GM12878 (cell line): ENCODE measurements at regions of chr15 and their contacts with region 1.

Region 1: GRCh38 chr15:64507293-64507802 is 47.0 kb downstream of the ZNF609 start:
- DNase-seq: peak; percentile 48
- ATAC-seq: peak; percentile 93
- H3K4me3 ChIP-seq: no peak overlapping the region
- H3K27ac ChIP-seq: peak overlapping the region; percentile 76
- H3K4me1 ChIP-seq: peaks cover 30% of the 10 kb centered on the region
- H3K27me3 ChIP-seq: no peaks in the 10 kb centered on the region
- CTCF ChIP-seq: no peak
- EP300 ChIP-seq: 0 out of 4 replicates have a peak, but pooled peaks of 1 of the 2 experiments have one; percentile 8
- POLR2A ChIP-seq: no peak
- RAD21 ChIP-seq: no peak

Region 2: GRCh38 chr15:64430000-64430735 is 77.2 kb before region 1 on chr15:
- CTCF ChIA-PET with region 1: interaction called, 5 read pairs
- POLR2A ChIA-PET with region 1: interaction called, 5 read pairs
- RAD21 ChIA-PET with region 1: interaction called, 10 read pairs
- SMC1A ChIA-PET with region 1: interaction called, 10 read pairs
- in situ Hi-C with region 1: no loop called
- intact Hi-C with region 1: no loop called
- DNase-seq: peak; percentile 65
- ATAC-seq: peak; percentile 87
- H3K4me3 ChIP-seq: 0 out of 2 replicates have a peak overlapping the region, but pooled peaks have one; percentile 6
- H3K27ac ChIP-seq: peak overlapping the region; percentile 87
- H3K4me1 ChIP-seq: peaks cover 19% of the 10 kb centered on the region
- H3K27me3 ChIP-seq: no peaks in the 10 kb centered on the region
- CTCF ChIP-seq: no peak
- EP300 ChIP-seq: peak in 1 of 2 experiments; percentile 55; a peak in 2 of 4 replicates
- POLR2A ChIP-seq: no peak
- RAD21 ChIP-seq: no peak

Region 3: GRCh38 chr15:64460206-64460734 is 47.1 kb before region 1 on chr15 and contains the start of gene ZNF609:
- CTCF ChIA-PET with region 1: interaction called, 6 read pairs
- POLR2A ChIA-PET with region 1: interaction called, 6 read pairs
- RAD21 ChIA-PET with region 1: interaction called, 10 read pairs
- SMC1A ChIA-PET with region 1: interaction called, 32 read pairs
- in situ Hi-C with region 1: no loop called
- intact Hi-C with region 1: no loop called
- DNase-seq: no peak
- ATAC-seq: peak; percentile 63
- H3K4me3 ChIP-seq: peak within 1 kb of the TSS; percentile 78
- H3K27ac ChIP-seq: peak within 1 kb of the TSS; percentile 92
- H3K4me1 ChIP-seq: peaks cover 50% of the 10 kb centered on the region
- H3K27me3 ChIP-seq: no peaks in the 10 kb centered on the region
- CTCF ChIP-seq: 0 out of 6 replicates have a peak, but pooled peaks of 1 of the 3 experiments have one; percentile 4
- EP300 ChIP-seq: no peak
- POLR2A ChIP-seq: peak; percentile 72
- RAD21 ChIP-seq: peak; percentile 27; the same call in 1 of the 2 replicates
- polyA plus RNA-seq, gene ZNF609: 5.1 to 7.4 TPM

Region 4: GRCh38 chr15:64521726-64522164 is 14.4 kb after region 1 on chr15:
- CTCF ChIA-PET with region 1: interaction called, 8 read pairs
- POLR2A ChIA-PET with region 1: interaction called, 3 read pairs
- RAD21 ChIA-PET with region 1: interaction called, 4 read pairs
- SMC1A ChIA-PET with region 1: interaction called, 11 read pairs
- in situ Hi-C with region 1: no loop called
- intact Hi-C with region 1: no loop called
- DNase-seq: no peak
- ATAC-seq: peak; percentile 73
- H3K4me3 ChIP-seq: no peak overlapping the region
- H3K27ac ChIP-seq: no peak overlapping the region
- H3K4me1 ChIP-seq: no peaks in the 10 kb centered on the region
- H3K27me3 ChIP-seq: no peaks in the 10 kb centered on the region
- CTCF ChIP-seq: no peak
- EP300 ChIP-seq: no peak
- POLR2A ChIP-seq: no peak
- RAD21 ChIP-seq: no peak

Region 5: GRCh38 chr15:64558460-64559179 is 51.3 kb after region 1 on chr15:
- CTCF ChIA-PET with region 1: interaction called, 7 read pairs
- POLR2A ChIA-PET with region 1: interaction called, 6 read pairs
- RAD21 ChIA-PET with region 1: interaction called, 11 read pairs
- SMC1A ChIA-PET with region 1: interaction called, 31 read pairs
- in situ Hi-C with region 1: no loop called
- intact Hi-C with region 1: no loop called
- DNase-seq: no peak
- ATAC-seq: peak; percentile 79
- H3K4me3 ChIP-seq: no peak overlapping the region
- H3K27ac ChIP-seq: peak overlapping the region; percentile 7; the same call in 1 of the 2 replicates
- H3K4me1 ChIP-seq: no peaks in the 10 kb centered on the region; the same call in 1 of the 2 replicates
- H3K27me3 ChIP-seq: no peaks in the 10 kb centered on the region
- CTCF ChIP-seq: no peak
- EP300 ChIP-seq: no peak
- POLR2A ChIP-seq: no peak
- RAD21 ChIP-seq: no peak

Region 6: GRCh38 chr15:64571857-64572291 is 64.5 kb after region 1 on chr15:
- CTCF ChIA-PET with region 1: interaction called, 4 read pairs
- POLR2A ChIA-PET with region 1: interaction called, 3 read pairs
- RAD21 ChIA-PET with region 1: interaction called, 12 read pairs
- SMC1A ChIA-PET with region 1: interaction called, 15 read pairs
- in situ Hi-C with region 1: no loop called
- intact Hi-C with region 1: no loop called
- DNase-seq: peak; percentile 92
- ATAC-seq: peak; percentile 83
- H3K4me3 ChIP-seq: no peak overlapping the region
- H3K27ac ChIP-seq: peak overlapping the region; percentile 75
- H3K4me1 ChIP-seq: peaks cover 43% of the 10 kb centered on the region
- H3K27me3 ChIP-seq: no peaks in the 10 kb centered on the region
- CTCF ChIP-seq: no peak
- EP300 ChIP-seq: 0 out of 4 replicates have a peak, but pooled peaks of 1 of the 2 experiments have one; percentile 29
- POLR2A ChIP-seq: no peak
- RAD21 ChIP-seq: no peak

Region 7: DNA sequence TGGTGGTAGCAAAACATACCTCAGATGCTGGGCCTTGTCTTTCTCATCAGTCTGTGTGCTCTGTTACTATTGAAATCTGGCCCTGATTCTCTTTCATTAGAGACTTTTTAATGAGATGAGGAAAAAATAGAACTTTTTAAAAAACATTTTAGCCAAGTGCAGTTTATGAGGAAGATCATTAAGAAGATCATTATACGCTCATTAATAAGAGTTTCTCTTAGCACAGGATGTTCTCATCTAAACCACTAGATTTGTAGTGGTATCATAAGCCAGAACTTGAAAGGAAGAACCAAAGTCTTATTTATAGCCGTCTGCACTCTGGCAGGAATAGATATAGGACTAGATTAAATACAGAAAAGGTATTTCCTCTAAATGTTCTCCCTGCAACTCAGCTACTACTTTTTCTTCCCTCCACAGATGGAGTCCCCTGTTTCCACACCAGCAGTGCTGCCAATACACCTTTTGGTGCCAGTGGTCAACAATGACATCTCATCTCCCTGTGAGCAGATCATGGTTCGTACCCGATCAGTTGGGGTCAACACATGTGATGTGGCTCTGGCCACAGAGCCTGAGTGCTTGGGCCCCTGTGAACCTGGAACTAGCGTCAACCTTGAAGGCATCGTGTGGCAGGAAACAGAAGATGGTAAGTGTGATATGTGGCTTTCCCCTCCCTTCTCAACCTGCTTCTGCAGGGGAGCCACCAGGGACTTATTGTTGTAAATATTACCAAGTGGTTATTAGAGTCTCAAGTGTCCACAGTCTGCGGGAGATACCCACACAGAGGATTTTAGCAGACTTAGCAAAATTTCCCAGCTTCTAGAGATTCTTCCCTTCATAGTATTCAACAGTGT is 115.3 kb after region 1 on chr15:
- CTCF ChIA-PET with region 1: interaction called, 5 read pairs
- POLR2A ChIA-PET with region 1: no interaction called
- RAD21 ChIA-PET with region 1: interaction called, 13 read pairs
- SMC1A ChIA-PET with region 1: interaction called, 10 read pairs
- in situ Hi-C with region 1: no loop called
- intact Hi-C with region 1: no loop called
- DNase-seq: peak; percentile 96
- ATAC-seq: peak; percentile 93
- H3K4me3 ChIP-seq: no peak overlapping the region
- H3K27ac ChIP-seq: peak overlapping the region; percentile 90
- H3K4me1 ChIP-seq: peaks cover 55% of the 10 kb centered on the region
- H3K27me3 ChIP-seq: no peaks in the 10 kb centered on the region
- CTCF ChIP-seq: no peak
- EP300 ChIP-seq: peak; percentile 69 to 74
- POLR2A ChIP-seq: no peak
- RAD21 ChIP-seq: no peak